A673 (cell line): ENCODE measurements at regions of chr1 and their contacts with region 1.

Region 1: DNA sequence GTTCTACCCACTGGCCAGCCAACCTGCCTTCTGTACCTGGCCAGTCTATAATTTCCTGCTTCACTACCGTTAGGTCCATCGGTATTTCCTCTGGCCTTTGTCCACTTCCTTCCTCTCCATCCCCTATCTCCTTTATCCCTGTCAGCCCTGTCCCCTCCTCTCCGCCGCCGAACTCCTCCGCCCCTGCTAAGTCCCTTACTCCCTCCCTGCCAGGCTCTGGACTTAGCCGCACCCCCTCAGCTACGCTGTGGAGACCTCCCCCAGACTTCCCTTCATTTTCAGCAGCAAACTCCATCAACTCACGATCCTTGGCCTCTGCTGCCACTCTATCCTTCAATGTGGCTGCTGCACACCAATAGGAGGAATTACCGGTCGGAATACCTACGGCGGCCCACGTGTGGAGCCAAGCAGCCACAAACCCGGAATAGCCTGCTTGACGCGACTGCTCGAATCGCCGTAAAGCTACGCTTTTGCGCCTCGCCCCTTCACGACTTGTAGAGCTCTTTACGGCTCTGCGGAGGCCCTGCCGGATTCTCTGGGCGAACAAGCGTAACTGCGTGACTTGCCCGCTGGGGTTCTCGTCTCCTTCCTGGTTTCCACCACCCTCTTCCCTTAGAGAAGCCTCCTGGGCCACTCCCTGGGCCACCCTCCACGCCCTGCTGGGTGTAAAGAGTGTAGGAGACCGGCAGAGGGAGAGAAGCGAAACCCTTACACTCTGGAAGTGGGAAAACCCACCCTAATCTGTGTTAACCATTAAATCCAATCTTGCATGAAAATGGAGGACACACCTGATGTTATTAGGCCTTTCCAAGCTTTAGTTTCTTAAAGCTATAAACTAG is at the start of gene ZNHIT6:
- DNase-seq: peak; percentile 98
- H3K4me3 ChIP-seq: peak within 1 kb of the TSS; percentile 90
- H3K27ac ChIP-seq: peak within 1 kb of the TSS; percentile 75
- H3K4me1 ChIP-seq: peaks cover 10% of the 10 kb centered on the region
- H3K27me3 ChIP-seq: no peaks in the 10 kb centered on the region
- CTCF ChIP-seq: peak; percentile 48
- total RNA-seq, gene ZNHIT6: 31.5 and 37.6 TPM in 2 replicates

Region 2: DNA sequence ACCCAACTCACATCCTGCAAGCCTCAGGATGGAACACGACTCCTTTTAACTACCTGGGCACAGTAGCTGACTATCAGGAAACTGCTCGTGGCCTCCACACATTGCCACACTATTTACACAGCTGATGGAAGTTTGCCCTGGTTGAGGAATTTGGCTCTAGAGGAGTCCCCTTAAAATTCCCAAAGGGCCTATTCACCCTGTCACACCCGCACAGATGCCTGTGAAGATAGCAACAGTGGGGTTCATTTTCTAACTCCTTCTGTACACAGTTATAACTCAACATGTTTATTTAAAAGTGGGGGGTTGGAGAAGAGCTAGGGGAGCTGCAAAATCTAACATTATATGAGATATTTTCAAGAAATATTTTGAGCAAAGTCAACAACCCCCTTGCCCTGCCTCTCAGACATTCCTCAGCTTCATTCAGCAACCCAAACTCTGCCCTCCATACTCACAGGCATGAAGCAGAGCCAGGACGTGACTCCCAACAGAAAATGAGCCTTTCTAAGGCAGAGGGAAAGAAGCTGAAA is 163.5 kb before region 1 on chr1:
- CTCF ChIA-PET with region 1: no interaction called
- POLR2A ChIA-PET with region 1: no interaction called
- intact Hi-C with region 1: no loop called
- DNase-seq: no peak
- H3K4me3 ChIP-seq: no peak overlapping the region
- H3K27ac ChIP-seq: no peak overlapping the region
- H3K4me1 ChIP-seq: peaks cover 5% of the 10 kb centered on the region
- H3K27me3 ChIP-seq: no peaks in the 10 kb centered on the region
- CTCF ChIP-seq: no peak

Region 3: DNA sequence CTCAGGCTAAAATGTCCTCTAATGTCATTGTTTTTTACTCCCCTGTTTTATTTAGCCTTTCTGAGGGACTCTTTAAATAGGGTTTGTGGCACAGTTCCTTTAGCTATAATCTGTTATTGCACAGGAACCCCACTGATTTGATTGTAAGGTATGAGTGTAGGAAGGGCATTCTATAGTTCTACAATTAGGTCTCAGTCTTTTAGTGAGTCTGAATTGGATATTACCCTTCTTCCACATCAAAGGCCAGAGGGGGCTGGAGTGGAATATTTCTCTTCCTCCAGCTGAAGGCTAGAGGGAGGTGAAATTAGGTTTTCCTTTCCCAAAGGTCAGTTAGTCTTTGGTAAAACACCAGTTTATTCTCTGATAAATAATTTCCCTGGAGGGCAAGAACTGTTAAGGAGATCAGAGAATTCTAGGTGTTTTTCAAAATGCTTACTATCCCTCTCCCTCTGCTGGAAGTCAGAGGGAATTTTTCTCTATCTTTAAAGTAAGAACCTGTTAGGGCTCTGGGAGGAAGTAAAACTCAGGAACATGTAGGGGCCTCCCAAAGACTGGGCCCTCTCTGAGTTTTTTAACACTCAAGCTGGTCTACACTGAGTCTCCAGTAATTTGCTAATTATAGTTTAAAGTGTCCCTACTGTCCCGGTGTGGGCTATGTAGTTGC is 176.3 kb after region 1 on chr1:
- CTCF ChIA-PET with region 1: no interaction called
- POLR2A ChIA-PET with region 1: no interaction called
- intact Hi-C with region 1: loop called (anchors 10 kb)
- DNase-seq: peak; percentile 40
- H3K4me3 ChIP-seq: no peak overlapping the region
- H3K27ac ChIP-seq: no peak overlapping the region
- H3K4me1 ChIP-seq: no peaks in the 10 kb centered on the region
- H3K27me3 ChIP-seq: no peaks in the 10 kb centered on the region
- CTCF ChIP-seq: peak; percentile 60